ENCODE measurements at regions of chr17 and their contacts with region 1.

Region 1: DNA sequence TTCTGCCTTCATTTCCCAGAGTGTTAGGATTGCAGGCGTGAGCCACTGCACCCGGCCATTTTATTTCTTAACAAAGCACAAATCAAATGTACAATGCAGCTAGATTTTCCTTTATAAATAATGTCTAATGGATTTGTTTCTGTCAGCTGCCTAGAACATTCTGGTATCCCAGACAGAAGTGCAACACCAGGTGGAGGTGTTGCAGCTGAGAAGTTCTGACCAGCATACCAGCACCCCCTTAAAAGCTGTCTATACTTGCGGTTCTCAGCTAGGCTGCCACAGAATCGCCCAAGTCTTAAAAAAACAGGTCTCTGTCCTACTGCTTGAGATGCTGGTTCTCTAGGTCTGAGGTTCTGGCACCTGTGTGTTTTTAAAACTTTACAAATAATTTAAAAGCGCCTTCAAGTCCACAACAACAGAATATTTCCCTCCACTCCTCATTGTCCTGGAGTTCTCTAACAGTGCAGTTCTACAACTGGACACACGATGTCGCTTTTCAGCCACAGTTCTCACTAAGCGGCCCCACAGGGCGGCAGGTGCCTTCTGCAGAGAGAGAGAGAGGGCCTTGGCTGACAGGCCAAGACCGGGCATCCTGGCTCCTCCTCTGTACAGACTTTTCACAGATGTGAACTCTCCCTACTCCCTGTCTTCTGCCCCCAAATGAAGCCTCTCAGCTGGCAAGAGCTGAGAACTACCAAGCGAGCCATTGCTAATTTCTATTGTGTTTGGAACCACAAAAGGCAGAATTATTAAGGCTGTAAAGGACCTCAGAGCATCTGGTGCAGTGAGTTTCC is 32.6 kb upstream of the MEOX1 start:
- DNase-seq: peak; percentile 55
- H3K4me3 ChIP-seq: no peak overlapping the region
- H3K27ac ChIP-seq: no peak overlapping the region
- H3K4me1 ChIP-seq: peaks cover 23% of the 10 kb centered on the region
- H3K27me3 ChIP-seq: no peaks in the 10 kb centered on the region
- CTCF ChIP-seq: peak; percentile 98

Region 2: DNA sequence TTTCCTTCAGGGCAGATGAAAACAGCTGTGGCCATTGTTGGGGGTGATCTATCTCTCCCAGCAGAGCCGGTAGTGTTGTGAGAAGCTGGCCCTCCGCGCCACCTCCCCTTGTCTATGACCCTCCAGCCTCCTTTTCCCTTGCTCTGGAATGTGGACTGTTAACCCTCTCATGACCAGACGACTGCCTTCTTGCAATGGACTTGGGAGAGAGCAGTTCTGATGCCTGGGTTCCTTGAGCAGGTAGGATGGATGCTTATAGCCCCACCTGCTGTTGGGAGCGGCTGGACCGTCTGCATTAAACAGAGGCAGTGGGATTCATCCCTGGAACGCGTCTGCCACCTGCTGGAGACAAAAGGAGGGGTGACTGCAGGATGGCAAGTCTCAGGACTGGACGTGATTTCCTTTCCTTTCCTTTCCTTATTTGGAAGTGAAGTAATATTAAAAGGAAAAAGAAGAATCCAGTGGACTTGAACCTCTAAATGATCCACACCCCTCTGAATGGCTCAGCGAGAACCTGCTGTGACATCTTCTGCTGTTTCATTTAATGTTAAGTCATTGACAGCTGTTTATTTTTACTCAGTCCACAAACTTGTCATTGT is 66.1 kb after region 1 on chr17:
- intact Hi-C with region 1: loop called (anchors 2 kb)
- DNase-seq: peak; percentile 92
- H3K4me3 ChIP-seq: no peak overlapping the region
- H3K27ac ChIP-seq: no peak overlapping the region
- H3K4me1 ChIP-seq: peaks cover 8% of the 10 kb centered on the region
- H3K27me3 ChIP-seq: peaks cover 36% of the 10 kb centered on the region
- CTCF ChIP-seq: peak; percentile 99

Measured in left ventricle myocardium inferior (tissue), 1 donor.